Activated naive CD4-positive, alpha-beta T cell treated with anti-CD3 and anti-CD28 coated beads, Interleukin-2, amount 10 ng/mL, durations not matched to agents 7 days and 5 days (primary cell): ENCODE measurements at regions of chr1 and their contacts with region 1.

Region 1: GRCh38 chr1:111197598-111198284 is 2.7 kb downstream of the DENND2D start:
- DNase-seq: peak; percentile 79
- H3K4me3 Mint-ChIP-seq: peak overlapping the region; percentile 99
- H3K27ac Mint-ChIP-seq: peak overlapping the region; percentile 97
- H3K4me1 Mint-ChIP-seq: peaks cover 76% of the 10 kb centered on the region
- H3K27me3 Mint-ChIP-seq: no peaks in the 10 kb centered on the region

Region 2: GRCh38 chr1:111281411-111281810 is 83.7 kb after region 1 on chr1:
- CTCF ChIA-PET with region 1: no interaction called
- DNase-seq: no peak
- H3K4me3 Mint-ChIP-seq: no peak overlapping the region
- H3K27ac Mint-ChIP-seq: no peak overlapping the region
- H3K4me1 Mint-ChIP-seq: no peaks in the 10 kb centered on the region
- H3K27me3 Mint-ChIP-seq: peaks cover 5% of the 10 kb centered on the region

Region 3: GRCh38 chr1:111302374-111302773 is 104.6 kb after region 1 on chr1:
- CTCF ChIA-PET with region 1: no interaction called
- DNase-seq: no peak
- H3K4me3 Mint-ChIP-seq: no peak overlapping the region
- H3K27ac Mint-ChIP-seq: no peak overlapping the region
- H3K4me1 Mint-ChIP-seq: no peaks in the 10 kb centered on the region
- H3K27me3 Mint-ChIP-seq: peaks cover 6% of the 10 kb centered on the region

Region 4: GRCh38 chr1:111334169-111334568 is 136.4 kb after region 1 on chr1:
- CTCF ChIA-PET with region 1: interaction called, 13 read pairs
- DNase-seq: peak; percentile 72
- H3K4me3 Mint-ChIP-seq: no peak overlapping the region
- H3K27ac Mint-ChIP-seq: no peak overlapping the region
- H3K4me1 Mint-ChIP-seq: peaks cover 3% of the 10 kb centered on the region
- H3K27me3 Mint-ChIP-seq: peaks cover 5% of the 10 kb centered on the region

Region 5: GRCh38 chr1:111392460-111392945 is 194.8 kb after region 1 on chr1:
- CTCF ChIA-PET with region 1: no interaction called
- DNase-seq: no peak
- H3K4me3 Mint-ChIP-seq: no peak overlapping the region
- H3K27ac Mint-ChIP-seq: no peak overlapping the region
- H3K4me1 Mint-ChIP-seq: no peaks in the 10 kb centered on the region
- H3K27me3 Mint-ChIP-seq: peaks cover 31% of the 10 kb centered on the region